ENCODE measurements at regions of chr7 and their contacts with region 1.

Region 1: GRCh38 chr7:137898839-137899721 is 52.3 kb upstream of the DGKI start:
- DNase-seq: peak; percentile 82 to 93 (median 92)
- H3K4me3 ChIP-seq: peak overlapping the region in 6 of 7 experiments; percentile 35 to 70 (median 56)
- H3K27ac ChIP-seq: peak overlapping the region in 1 of 2 experiments; percentile 69
- H3K4me1 ChIP-seq: peaks cover 5 to 16% (median 9%) of the 10 kb centered on the region in 4 experiments
- H3K27me3 ChIP-seq: no peaks in the 10 kb centered on the region

Region 2: GRCh38 chr7:137656227-137656849 is 242.7 kb before region 1 on chr7:
- CTCF ChIA-PET with region 1: interaction called, 17 read pairs
- POLR2A ChIA-PET with region 1: no interaction called
- DNase-seq: peak; percentile 67 to 81 (median 76)
- H3K4me3 ChIP-seq: no peak overlapping the region
- H3K27ac ChIP-seq: no peak overlapping the region
- H3K4me1 ChIP-seq: no peaks in the 10 kb centered on the region
- H3K27me3 ChIP-seq: peaks cover 0 to 4% (median 0%) of the 10 kb centered on the region in 5 experiments

Region 3: DNA sequence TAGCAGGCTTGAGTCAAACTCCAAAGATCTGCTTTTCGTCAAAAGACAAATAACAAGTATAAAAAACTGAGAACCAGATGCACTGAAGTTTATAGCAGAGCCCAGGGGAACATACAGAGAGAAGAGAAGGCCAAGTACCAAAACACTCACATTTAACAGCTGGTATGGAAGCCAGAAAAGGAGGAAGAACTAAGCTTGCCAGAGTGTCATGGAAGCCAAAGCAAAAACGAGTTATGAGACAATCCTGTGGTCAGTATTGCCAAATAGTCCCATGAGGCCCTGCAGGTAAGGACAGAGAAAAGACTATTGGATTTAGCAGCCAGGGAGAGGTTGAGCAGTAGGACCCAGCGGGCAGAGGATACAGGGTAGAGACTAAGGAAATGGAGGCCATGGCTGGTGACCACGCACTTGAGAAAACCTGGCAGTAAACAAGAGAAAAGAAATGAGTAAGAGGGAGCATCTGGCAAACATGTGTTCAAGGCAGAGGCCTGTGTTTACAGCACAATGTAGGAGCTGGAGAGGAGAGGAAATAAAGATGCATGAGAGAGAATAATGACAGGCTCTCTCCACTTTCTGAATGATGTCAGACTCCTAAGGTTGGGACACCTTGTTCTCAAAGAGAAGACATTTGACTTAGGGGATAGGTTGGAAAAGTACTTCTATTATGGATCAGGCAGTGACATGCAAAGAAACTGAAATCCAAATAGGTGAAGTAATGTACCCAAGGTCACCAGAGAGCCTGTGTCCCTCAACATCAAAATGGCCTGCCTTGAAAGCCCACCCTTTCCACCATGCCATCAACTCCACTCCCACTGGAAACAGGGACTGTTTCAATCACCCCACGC is 93.7 kb after region 1 on chr7:
- CTCF ChIA-PET with region 1: interaction called, 408 read pairs
- POLR2A ChIA-PET with region 1: no interaction called
- DNase-seq: peak in 2 of 3 donors; percentile 63 to 77
- H3K4me3 ChIP-seq: peak overlapping the region in 1 of 7 experiments; percentile 8
- H3K27ac ChIP-seq: peak overlapping the region in 1 of 2 experiments; percentile 51
- H3K4me1 ChIP-seq: peaks cover 18 to 54% (median 40%) of the 10 kb centered on the region in 4 experiments
- H3K27me3 ChIP-seq: no peaks in the 10 kb centered on the region

Region 4: GRCh38 chr7:138002096-138002827 is 103.2 kb after region 1 on chr7:
- CTCF ChIA-PET with region 1: interaction called, 408 read pairs
- POLR2A ChIA-PET with region 1: no interaction called
- DNase-seq: peak; percentile 99 to 100 (median 100)
- H3K4me3 ChIP-seq: peak overlapping the region; percentile 82 to 99 (median 97)
- H3K27ac ChIP-seq: peak overlapping the region; percentile 87 to 94
- H3K4me1 ChIP-seq: peaks cover 12 to 59% (median 44%) of the 10 kb centered on the region in 4 experiments
- H3K27me3 ChIP-seq: no peaks in the 10 kb centered on the region

Region 5: DNA sequence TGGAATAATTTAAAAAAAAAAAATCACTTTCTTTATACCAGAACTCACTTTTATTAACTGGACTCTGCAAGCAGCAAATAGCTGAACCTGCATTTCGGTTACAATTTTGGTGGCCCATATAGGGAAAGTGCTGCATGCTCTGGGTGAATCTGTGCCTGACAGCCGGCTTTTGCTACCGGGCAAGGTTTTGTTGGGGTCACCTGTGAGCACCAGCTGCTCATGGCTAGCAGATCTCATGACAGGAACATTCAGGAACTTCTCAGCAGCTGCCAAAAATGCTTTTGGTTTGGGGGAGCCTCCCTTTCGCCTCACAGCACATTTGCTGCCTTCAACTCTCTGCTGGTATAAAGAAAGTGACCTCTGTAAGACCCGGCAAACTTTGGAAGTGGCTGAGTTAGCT is 116.0 kb after region 1 on chr7:
- CTCF ChIA-PET with region 1: interaction called, 408 read pairs
- POLR2A ChIA-PET with region 1: no interaction called
- DNase-seq: no peak
- H3K4me3 ChIP-seq: no peak overlapping the region
- H3K27ac ChIP-seq: no peak overlapping the region
- H3K4me1 ChIP-seq: peaks cover 0 to 2% (median 0%) of the 10 kb centered on the region in 4 experiments
- H3K27me3 ChIP-seq: no peaks in the 10 kb centered on the region

Region 6: DNA sequence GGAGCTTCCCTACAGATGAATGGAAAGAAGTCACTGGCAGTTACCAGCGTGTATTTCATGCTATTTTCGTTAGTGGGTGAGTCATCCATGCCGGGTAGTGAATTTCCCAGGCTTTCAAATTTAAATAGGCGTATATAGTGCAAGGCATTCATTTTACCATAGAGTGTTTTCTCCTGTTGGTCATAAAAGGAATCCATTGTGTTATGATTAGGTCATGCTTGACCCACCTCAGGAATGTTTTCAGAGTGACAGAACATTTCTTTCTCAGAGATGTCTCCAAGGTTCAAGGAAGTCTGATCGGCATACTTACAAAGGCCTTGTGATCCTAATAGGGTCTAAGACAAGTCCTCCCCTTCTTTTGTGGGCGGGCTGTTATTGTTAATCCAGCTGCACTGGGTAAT is 287.9 kb after region 1 on chr7:
- CTCF ChIA-PET with region 1: no interaction called
- POLR2A ChIA-PET with region 1: no interaction called
- DNase-seq: no peak
- H3K4me3 ChIP-seq: no peak overlapping the region
- H3K27ac ChIP-seq: no peak overlapping the region
- H3K4me1 ChIP-seq: no peaks in the 10 kb centered on the region
- H3K27me3 ChIP-seq: no peaks in the 10 kb centered on the region

Measured in common myeloid progenitor, CD34-positive (primary cell).